A673 (cell line): ENCODE measurements at regions of chr15 and their contacts with region 1.

Region 1: DNA sequence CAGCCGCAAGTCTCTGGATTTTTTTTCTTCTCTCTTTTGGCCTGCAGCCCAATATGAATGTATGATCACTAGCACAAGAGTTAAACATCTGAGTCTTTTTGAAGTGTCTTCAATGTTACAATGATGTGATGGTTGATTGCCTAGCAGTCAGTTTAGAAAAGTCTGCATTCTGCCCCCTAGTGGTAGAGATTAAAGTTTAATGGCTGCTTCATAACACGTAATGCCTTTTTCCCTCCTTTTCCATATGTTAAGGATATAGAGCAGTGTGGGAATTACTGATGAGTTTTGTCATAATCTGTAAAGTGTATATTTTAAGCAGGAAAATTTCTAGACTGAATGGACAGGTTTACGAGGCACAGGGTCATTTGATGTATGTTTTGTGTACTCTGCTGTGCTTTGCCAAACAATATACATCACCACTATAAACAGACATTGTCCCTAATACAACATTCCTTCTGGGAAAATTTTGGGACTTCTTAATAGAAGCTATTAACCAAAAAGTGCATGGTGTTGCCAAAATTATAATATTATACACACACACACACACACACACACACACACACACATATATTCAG is 1038.5 kb upstream of the NR2F2 start:
- DNase-seq: peak; percentile 72
- H3K4me3 ChIP-seq: no peak overlapping the region
- H3K27ac ChIP-seq: no peak overlapping the region
- H3K4me1 ChIP-seq: peaks cover 25% of the 10 kb centered on the region
- H3K27me3 ChIP-seq: no peaks in the 10 kb centered on the region
- CTCF ChIP-seq: peak; percentile 80

Region 2: DNA sequence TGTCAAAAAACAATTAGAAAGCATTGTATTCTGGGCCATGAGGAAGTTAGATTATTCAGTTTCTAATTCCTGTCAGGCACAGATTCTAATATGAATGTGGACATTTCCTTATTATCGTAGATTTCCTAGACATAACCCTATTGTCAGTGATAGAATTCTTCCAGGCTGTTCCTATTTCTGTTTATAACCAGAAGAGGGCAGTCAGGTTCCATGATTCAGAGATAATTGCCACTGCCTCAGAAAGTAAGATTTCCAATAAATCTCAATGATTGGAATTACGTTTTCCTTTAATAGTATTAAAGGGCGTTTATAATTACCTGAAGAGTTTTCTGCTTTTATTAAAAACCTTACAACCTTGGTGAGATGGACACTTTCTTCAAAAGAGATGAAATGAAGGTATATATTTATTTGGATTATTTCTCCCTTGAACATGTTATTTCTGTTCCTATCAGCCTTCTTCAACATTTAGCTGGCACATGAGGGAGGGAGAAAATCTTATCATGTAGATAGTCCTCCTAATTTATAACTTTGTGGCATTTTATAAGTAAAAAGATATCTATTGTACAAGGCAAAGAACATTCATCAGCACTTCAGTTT is 621.4 kb before region 1 on chr15:
- CTCF ChIA-PET with region 1: no interaction called
- POLR2A ChIA-PET with region 1: no interaction called
- intact Hi-C with region 1: loop called (anchors 5 kb)
- DNase-seq: peak; percentile 59
- H3K4me3 ChIP-seq: no peak overlapping the region
- H3K27ac ChIP-seq: no peak overlapping the region
- H3K4me1 ChIP-seq: peaks cover 9% of the 10 kb centered on the region
- H3K27me3 ChIP-seq: no peaks in the 10 kb centered on the region
- CTCF ChIP-seq: peak; percentile 80

Region 3: DNA sequence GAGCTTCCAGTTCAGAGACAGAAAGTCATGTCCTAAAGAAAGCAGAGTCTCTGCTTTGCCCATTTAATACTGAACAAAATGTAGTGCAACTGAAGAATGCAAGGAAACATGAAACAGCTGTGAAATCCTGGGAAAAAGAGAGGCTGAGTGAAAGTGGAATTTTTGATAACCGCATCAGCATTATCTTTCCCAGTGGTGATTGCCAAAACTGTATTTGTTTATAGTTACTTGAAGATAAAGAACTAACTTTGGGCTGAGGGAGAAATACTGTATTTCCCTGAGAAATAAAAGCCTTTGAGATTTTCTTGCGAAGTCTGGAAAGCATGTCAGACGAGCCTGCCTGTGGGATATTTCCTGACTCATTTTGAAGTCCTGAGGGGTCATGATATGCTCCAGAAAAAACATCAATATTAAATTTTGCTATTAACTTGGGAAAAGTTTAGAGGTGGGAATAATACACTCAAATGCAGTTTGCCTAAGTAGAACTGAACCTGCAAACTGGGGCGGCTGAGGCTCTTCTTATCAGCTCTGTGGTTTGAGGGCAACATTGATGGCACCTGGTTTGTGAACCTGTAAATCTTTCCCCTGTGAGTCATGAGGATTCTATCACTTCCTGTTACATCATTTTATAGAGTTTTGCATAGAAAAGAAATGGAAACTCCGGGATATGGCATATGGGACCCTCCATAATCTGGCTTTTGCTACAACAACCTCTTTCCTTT is 205.3 kb before region 1 on chr15:
- CTCF ChIA-PET with region 1: no interaction called
- POLR2A ChIA-PET with region 1: no interaction called
- intact Hi-C with region 1: no loop called
- DNase-seq: no peak
- H3K4me3 ChIP-seq: no peak overlapping the region
- H3K27ac ChIP-seq: no peak overlapping the region
- H3K4me1 ChIP-seq: no peaks in the 10 kb centered on the region
- H3K27me3 ChIP-seq: no peaks in the 10 kb centered on the region
- CTCF ChIP-seq: no peak

Region 4: GRCh38 chr15:95341686-95342085 is 49.7 kb after region 1 on chr15:
- CTCF ChIA-PET with region 1: no interaction called
- POLR2A ChIA-PET with region 1: no interaction called
- intact Hi-C with region 1: loop called (anchors 2 kb)
- DNase-seq: no peak
- H3K4me3 ChIP-seq: no peak overlapping the region
- H3K27ac ChIP-seq: no peak overlapping the region
- H3K4me1 ChIP-seq: no peaks in the 10 kb centered on the region
- H3K27me3 ChIP-seq: no peaks in the 10 kb centered on the region
- CTCF ChIP-seq: no peak

Region 5: DNA sequence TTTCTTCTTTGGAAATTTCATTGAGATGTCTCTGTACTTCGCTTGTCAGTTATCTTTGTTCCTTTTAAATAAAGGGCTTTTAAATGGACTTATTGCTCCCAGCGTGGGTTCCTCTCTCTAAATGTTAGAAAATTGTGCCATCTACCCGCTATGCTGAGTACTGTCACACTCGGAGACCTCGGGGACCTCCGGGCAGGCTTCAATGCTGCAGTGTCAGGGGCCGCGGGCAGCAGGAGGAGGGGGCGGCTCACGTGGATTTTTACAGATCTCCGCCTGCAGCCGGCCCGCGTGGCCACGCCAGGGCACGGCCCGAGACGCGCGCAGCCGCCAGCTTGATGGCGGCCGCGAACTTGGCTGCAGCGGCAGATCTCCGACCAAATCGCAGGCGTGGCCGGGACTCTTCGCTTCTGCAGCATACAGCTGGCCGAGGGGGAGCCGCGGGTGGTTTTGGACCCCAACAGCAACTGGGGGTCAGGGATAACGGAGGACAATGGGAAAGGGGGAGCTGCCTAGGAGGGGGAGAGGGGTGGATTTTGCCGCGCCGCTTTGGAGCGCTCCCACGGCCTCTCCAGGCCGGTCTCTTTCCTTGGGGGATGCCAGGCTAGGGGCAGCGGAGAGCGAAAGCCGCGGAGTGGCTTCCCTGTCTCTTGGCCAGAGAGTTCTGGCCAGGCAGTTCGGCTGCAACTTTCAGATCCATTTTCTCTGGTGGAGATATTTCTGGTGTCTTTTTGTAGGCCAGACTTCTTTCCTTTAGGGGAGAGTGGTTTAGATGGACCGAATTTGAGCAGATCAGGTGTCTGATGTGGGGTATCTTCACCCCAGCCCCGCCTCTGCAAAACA is 1053.8 kb after region 1 on chr15:
- CTCF ChIA-PET with region 1: no interaction called
- POLR2A ChIA-PET with region 1: no interaction called
- intact Hi-C with region 1: loop called (anchors 10 kb)
- DNase-seq: peak; percentile 88
- H3K4me3 ChIP-seq: peak overlapping the region; percentile 50
- H3K27ac ChIP-seq: peak overlapping the region; percentile 79
- H3K4me1 ChIP-seq: peaks cover 88% of the 10 kb centered on the region
- H3K27me3 ChIP-seq: no peaks in the 10 kb centered on the region
- CTCF ChIP-seq: peak; percentile 79